Activated B cell treated with CpG ODN at 0.5 μM for 24 hours (primary cell): ENCODE measurements at regions of chr3 and their contacts with region 1.

Region 1: GRCh38 chr3:71444028-71444860 is 139.3 kb downstream of the FOXP1 start:
- DNase-seq: peak; percentile 62
- ATAC-seq: peak; percentile 80
- H3K4me3 Mint-ChIP-seq: peak overlapping the region; percentile 78
- H3K27ac Mint-ChIP-seq: peak overlapping the region; percentile 99
- H3K4me1 Mint-ChIP-seq: peaks cover 93% of the 10 kb centered on the region
- H3K27me3 Mint-ChIP-seq: no peaks in the 10 kb centered on the region
- CTCF ChIP-seq: no peak

Region 2: GRCh38 chr3:71006810-71007785 is 437.1 kb before region 1 on chr3:
- CTCF ChIA-PET with region 1: no interaction called
- POLR2A ChIA-PET with region 1: no interaction called
- intact Hi-C with region 1: loop called (anchors 5 kb)
- DNase-seq: no peak
- ATAC-seq: peak; percentile 35
- H3K4me3 Mint-ChIP-seq: no peak overlapping the region
- H3K27ac Mint-ChIP-seq: peak overlapping the region; percentile 84
- H3K4me1 Mint-ChIP-seq: peaks cover 73% of the 10 kb centered on the region
- H3K27me3 Mint-ChIP-seq: no peaks in the 10 kb centered on the region
- CTCF ChIP-seq: peak; percentile 75

Region 3: DNA sequence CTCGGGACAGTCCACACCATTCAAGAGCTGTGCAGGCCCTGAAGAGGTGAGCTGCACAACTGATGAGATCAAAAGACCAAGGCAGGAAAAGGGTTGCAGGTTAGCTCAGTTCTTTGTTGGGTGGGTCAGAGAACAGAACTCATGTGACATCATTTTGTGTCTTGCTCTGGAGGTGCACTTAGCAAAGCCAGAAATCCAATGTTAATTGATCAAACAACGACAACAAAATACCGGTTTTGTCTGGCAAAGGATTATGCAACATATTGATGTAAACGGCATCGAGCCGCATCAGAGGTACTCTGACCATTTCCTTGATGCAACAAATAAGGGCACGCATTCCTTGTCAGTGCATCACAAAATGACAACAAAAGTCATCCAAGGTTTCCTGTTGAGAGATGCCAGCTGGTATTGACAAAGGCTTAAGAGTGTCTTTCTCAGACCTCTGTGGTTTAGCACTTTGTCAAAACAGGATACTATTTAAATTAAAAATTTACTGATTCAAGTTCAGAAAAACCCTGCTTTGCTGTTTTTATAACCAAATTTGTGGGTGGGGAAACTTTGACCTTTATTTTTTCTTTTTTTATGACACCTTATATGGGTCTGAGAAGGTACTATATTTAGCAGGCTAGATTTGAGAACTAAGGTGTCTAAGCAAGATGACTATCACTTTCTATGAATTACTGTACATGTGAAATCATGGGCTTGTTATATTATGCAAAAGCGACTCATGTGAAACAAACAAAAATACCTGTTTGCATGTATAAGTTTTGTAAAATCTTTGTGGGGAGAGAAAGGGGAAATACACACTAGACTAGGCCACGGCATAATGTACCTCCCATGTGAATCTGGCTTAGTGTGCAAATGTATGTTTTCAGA is 356.9 kb before region 1 on chr3:
- CTCF ChIA-PET with region 1: no interaction called
- POLR2A ChIA-PET with region 1: interaction called, 11 read pairs
- intact Hi-C with region 1: loop called (anchors 2 kb)
- DNase-seq: no peak
- ATAC-seq: peak; percentile 56
- H3K4me3 Mint-ChIP-seq: peak overlapping the region; percentile 54
- H3K27ac Mint-ChIP-seq: peak overlapping the region; percentile 99
- H3K4me1 Mint-ChIP-seq: peaks cover 97% of the 10 kb centered on the region
- H3K27me3 Mint-ChIP-seq: no peaks in the 10 kb centered on the region
- CTCF ChIP-seq: no peak

Region 4: GRCh38 chr3:71389911-71390573 is 54.2 kb before region 1 on chr3:
- CTCF ChIA-PET with region 1: interaction called, 4 read pairs
- POLR2A ChIA-PET with region 1: interaction called, 36 read pairs
- intact Hi-C with region 1: loop called (anchors 1 kb)
- DNase-seq: no peak
- ATAC-seq: peak; percentile 6
- H3K4me3 Mint-ChIP-seq: peak overlapping the region; percentile 73
- H3K27ac Mint-ChIP-seq: peak overlapping the region; percentile 99
- H3K4me1 Mint-ChIP-seq: peaks cover 86% of the 10 kb centered on the region
- H3K27me3 Mint-ChIP-seq: no peaks in the 10 kb centered on the region
- CTCF ChIP-seq: no peak

Region 5: DNA sequence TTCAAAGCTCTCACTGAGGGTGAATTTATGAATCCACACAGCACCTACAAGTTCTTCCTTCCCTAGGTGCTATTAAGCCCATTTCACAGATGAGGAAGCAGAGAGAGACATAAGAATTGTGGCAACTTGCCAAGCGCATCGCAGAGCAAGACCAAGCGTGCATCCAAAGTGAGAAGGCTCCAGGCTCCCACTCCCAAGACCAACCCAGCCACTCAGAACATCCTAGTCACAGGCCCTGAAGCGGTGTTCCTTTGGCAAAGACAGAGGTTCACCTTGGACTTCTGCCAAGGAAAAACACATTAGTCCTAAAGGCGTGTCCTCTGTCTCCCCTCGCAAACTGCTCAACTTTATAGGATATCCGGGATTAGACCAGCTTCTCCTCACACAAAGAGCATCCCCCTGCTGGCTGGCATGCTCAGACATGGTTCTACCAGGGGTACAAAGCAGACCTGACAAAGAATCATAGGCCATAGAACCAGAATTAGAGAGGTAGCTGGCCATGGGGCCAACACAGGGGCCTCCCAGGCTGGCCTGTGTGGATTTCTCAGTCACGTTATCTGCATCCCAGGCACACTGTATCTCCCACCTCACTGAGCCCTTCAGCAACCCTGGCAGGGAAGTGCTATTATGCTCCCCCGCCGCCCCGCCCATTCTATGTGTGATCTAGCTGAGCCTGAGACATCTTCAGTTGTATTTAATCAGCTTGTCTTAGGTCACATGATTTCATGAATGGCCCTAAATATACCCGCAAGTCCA is 20.9 kb before region 1 on chr3:
- CTCF ChIA-PET with region 1: no interaction called
- POLR2A ChIA-PET with region 1: interaction called, 50 read pairs
- intact Hi-C with region 1: loop called (anchors 1 kb)
- DNase-seq: no peak
- ATAC-seq: no peak
- H3K4me3 Mint-ChIP-seq: no peak overlapping the region
- H3K27ac Mint-ChIP-seq: peak overlapping the region; percentile 99
- H3K4me1 Mint-ChIP-seq: peaks cover 91% of the 10 kb centered on the region
- H3K27me3 Mint-ChIP-seq: no peaks in the 10 kb centered on the region
- CTCF ChIP-seq: no peak

Region 6: GRCh38 chr3:71478568-71478967 is 34.3 kb after region 1 on chr3:
- CTCF ChIA-PET with region 1: no interaction called
- POLR2A ChIA-PET with region 1: no interaction called
- intact Hi-C with region 1: loop called (anchors 2 kb)
- DNase-seq: no peak
- ATAC-seq: peak; percentile 90
- H3K4me3 Mint-ChIP-seq: no peak overlapping the region
- H3K27ac Mint-ChIP-seq: peak overlapping the region; percentile 75
- H3K4me1 Mint-ChIP-seq: peaks cover 46% of the 10 kb centered on the region
- H3K27me3 Mint-ChIP-seq: no peaks in the 10 kb centered on the region
- CTCF ChIP-seq: no peak

Region 7: GRCh38 chr3:71734883-71735282 is 290.6 kb after region 1 on chr3:
- CTCF ChIA-PET with region 1: no interaction called
- POLR2A ChIA-PET with region 1: no interaction called
- intact Hi-C with region 1: no loop called
- DNase-seq: no peak
- ATAC-seq: no peak
- H3K4me3 Mint-ChIP-seq: no peak overlapping the region
- H3K27ac Mint-ChIP-seq: no peak overlapping the region
- H3K4me1 Mint-ChIP-seq: peaks cover 1% of the 10 kb centered on the region
- H3K27me3 Mint-ChIP-seq: peaks cover 25% of the 10 kb centered on the region
- CTCF ChIP-seq: no peak